ENCODE measurements at regions of chr11 and their contacts with region 1.

Region 1: GRCh38 chr11:118240999-118241768 is 11.0 kb downstream of the MPZL3 start:
- DNase-seq: peak; percentile 33 to 84
- ATAC-seq: peak; percentile 91 to 97 (median 93)
- H3K4me3 ChIP-seq: no peak overlapping the region
- H3K4me3 Mint-ChIP-seq: peak overlapping the region; percentile 79
- H3K27ac ChIP-seq: peak overlapping the region; percentile 67
- H3K27ac Mint-ChIP-seq: peak overlapping the region; percentile 74 to 86
- H3K4me1 ChIP-seq: peaks cover 33% of the 10 kb centered on the region
- H3K4me1 Mint-ChIP-seq: peaks cover 55 to 61% of the 10 kb centered on the region in 2 donors
- H3K27me3 ChIP-seq: no peaks in the 10 kb centered on the region
- H3K27me3 Mint-ChIP-seq: no peaks in the 10 kb centered on the region
- CTCF ChIP-seq: no peak

Region 2: GRCh38 chr11:118198370-118198769 is 42.8 kb before region 1 on chr11:
- intact Hi-C with region 1: loop called (anchors 5 kb)
- DNase-seq: peak; percentile 79 to 90
- ATAC-seq: peak; percentile 75 to 91 (median 77)
- H3K4me3 ChIP-seq: no peak overlapping the region
- H3K4me3 Mint-ChIP-seq: no peak overlapping the region
- H3K27ac ChIP-seq: no peak overlapping the region
- H3K27ac Mint-ChIP-seq: peak overlapping the region in 1 of 2 donors; percentile 81
- H3K4me1 ChIP-seq: peaks cover 32% of the 10 kb centered on the region
- H3K4me1 Mint-ChIP-seq: peaks cover 5 to 11% of the 10 kb centered on the region in 2 donors
- H3K27me3 ChIP-seq: no peaks in the 10 kb centered on the region
- H3K27me3 Mint-ChIP-seq: no peaks in the 10 kb centered on the region
- CTCF ChIP-seq: peak; percentile 96

Region 3: GRCh38 chr11:118227865-118228785 is 13.1 kb before region 1 on chr11:
- intact Hi-C with region 1: loop called (anchors 1 kb)
- DNase-seq: peak; percentile 40 to 75
- ATAC-seq: peak; percentile 43 to 85 (median 70)
- H3K4me3 ChIP-seq: no peak overlapping the region
- H3K4me3 Mint-ChIP-seq: peak overlapping the region; percentile 80
- H3K27ac ChIP-seq: peak overlapping the region; percentile 70
- H3K27ac Mint-ChIP-seq: peak overlapping the region in 1 of 2 donors; percentile 77
- H3K4me1 ChIP-seq: peaks cover 54% of the 10 kb centered on the region
- H3K4me1 Mint-ChIP-seq: peaks cover 39 to 49% of the 10 kb centered on the region in 2 donors
- H3K27me3 ChIP-seq: no peaks in the 10 kb centered on the region
- H3K27me3 Mint-ChIP-seq: peaks cover 9 to 23% of the 10 kb centered on the region in 2 donors
- CTCF ChIP-seq: no peak

Region 4: DNA sequence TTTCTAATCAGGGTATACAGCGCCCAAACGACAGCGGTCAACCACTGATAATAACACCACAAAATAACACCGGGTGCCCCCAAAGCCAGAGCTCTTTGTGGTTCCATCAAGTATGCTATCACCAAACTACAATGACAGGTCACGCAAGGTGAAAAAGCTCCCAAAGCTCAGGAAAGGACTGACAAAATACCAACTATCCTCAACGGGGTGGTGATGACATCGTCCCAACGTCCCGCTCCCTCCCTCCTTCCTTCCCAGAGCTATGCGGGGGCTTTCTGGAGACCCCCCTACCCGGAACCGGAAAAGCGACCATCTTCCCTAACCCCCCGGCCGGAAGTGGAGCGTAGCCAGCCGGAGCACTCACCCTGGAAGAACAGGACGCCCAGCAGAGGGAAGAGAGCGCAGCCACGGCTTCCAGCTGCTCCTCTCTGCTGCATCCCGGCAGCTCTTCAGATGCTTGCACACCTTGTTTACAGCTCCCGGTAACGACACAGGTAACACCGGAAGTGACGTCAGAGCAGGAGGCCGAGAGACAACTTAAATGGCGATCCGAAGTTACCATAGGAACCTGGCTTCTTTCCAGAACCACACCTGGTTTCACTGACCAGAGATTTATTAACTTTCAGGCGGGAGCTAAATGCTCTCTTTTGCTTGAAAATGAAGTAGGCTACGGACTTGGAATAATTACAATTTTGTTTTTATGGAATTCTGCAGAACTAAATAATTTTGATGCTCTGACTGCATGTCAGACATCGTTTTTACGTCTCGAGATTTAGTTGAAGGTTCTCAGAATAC is 10.9 kb after region 1 on chr11 and contains the start of gene MPZL3:
- intact Hi-C with region 1: loop called (anchors 1 kb)
- DNase-seq: peak; percentile 76 to 97
- ATAC-seq: peak; percentile 75 to 83 (median 82)
- H3K4me3 ChIP-seq: peak within 1 kb of the TSS; percentile 82
- H3K4me3 Mint-ChIP-seq: peak within 1 kb of the TSS; percentile 98
- H3K27ac ChIP-seq: peak within 1 kb of the TSS; percentile 95
- H3K27ac Mint-ChIP-seq: peak within 1 kb of the TSS; percentile 98
- H3K4me1 ChIP-seq: peaks cover 8% of the 10 kb centered on the region
- H3K4me1 Mint-ChIP-seq: peaks cover 17 to 22% of the 10 kb centered on the region in 2 donors
- H3K27me3 ChIP-seq: no peaks in the 10 kb centered on the region
- H3K27me3 Mint-ChIP-seq: no peaks in the 10 kb centered on the region
- CTCF ChIP-seq: no peak
- total RNA-seq, gene MPZL3: 6.3 to 7.5 (median 6.7) TPM

Measured in natural killer cell (primary cell).